ENCODE measurements at regions of chr18 and their contacts with region 1.

Region 1: GRCh38 chr18:41096504-41096903 is 858.5 kb upstream of the PIK3C3 start:
- DNase-seq: peak; percentile 60
- H3K4me3 Mint-ChIP-seq: no peak overlapping the region
- H3K27ac Mint-ChIP-seq: no peak overlapping the region
- H3K4me1 Mint-ChIP-seq: peaks cover 14% of the 10 kb centered on the region
- H3K27me3 Mint-ChIP-seq: no peaks in the 10 kb centered on the region
- CTCF ChIP-seq: peak; percentile 60

Region 2: DNA sequence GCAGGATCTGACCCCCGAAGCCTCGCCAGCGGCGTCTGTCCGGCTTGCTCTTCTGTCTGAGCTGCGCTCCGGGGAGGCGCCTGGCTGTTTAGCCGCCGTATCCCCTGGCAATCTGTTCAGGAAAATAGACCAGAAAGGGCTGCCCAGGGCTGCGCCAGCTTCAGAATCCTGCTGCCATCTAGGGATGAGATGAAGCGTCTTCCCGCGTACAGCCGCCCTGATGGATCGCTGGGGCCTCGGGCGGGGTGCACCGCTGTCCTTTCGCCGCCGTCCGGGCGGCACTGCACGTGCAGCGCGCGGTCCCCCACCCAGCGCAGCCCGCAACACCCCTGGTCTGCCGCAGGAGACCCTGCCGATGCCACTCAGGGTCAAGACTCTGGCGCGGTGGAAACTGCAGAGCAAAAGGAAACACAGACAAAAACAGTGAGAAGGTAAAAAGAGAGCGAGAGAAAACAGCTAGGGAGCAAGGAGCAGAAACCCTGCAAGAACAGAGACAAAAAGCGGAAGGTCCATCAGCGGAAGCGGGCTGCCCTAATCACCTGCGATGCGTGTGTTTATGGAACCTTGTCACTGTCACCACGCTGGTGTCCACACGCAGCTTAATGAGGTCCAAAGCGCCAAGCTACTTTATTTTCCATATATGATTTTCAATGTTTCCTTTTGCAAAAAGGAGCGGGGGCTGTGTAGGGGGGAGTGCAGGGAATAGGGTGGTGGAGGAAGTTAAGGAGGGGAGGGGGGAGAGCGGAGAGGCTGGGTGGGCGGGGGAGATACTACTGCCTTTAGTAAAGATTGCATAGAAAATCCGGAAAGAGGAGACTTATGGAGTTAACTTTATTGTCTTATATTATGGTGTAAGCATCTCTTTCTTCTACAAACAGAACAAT is 1254.8 kb before region 1 on chr18:
- CTCF ChIA-PET with region 1: no interaction called
- POLR2A ChIA-PET with region 1: no interaction called
- intact Hi-C with region 1: loop called (anchors 5 kb)
- DNase-seq: peak; percentile 67
- H3K4me3 Mint-ChIP-seq: peak overlapping the region; percentile 83
- H3K27ac Mint-ChIP-seq: no peak overlapping the region
- H3K4me1 Mint-ChIP-seq: peaks cover 4% of the 10 kb centered on the region
- H3K27me3 Mint-ChIP-seq: no peaks in the 10 kb centered on the region
- CTCF ChIP-seq: peak; percentile 38

Region 3: GRCh38 chr18:40292985-40293710 is 803.4 kb before region 1 on chr18:
- CTCF ChIA-PET with region 1: no interaction called
- POLR2A ChIA-PET with region 1: no interaction called
- intact Hi-C with region 1: loop called (anchors 10 kb)
- DNase-seq: peak; percentile 27
- H3K4me3 Mint-ChIP-seq: no peak overlapping the region
- H3K27ac Mint-ChIP-seq: no peak overlapping the region
- H3K4me1 Mint-ChIP-seq: peaks cover 4% of the 10 kb centered on the region
- H3K27me3 Mint-ChIP-seq: no peaks in the 10 kb centered on the region
- CTCF ChIP-seq: peak; percentile 47

Region 4: GRCh38 chr18:40437517-40437916 is 659.0 kb before region 1 on chr18:
- CTCF ChIA-PET with region 1: interaction called, 4 read pairs
- POLR2A ChIA-PET with region 1: no interaction called
- intact Hi-C with region 1: loop called (anchors 5 kb)
- DNase-seq: peak; percentile 4
- H3K4me3 Mint-ChIP-seq: no peak overlapping the region
- H3K27ac Mint-ChIP-seq: no peak overlapping the region
- H3K4me1 Mint-ChIP-seq: peaks cover 5% of the 10 kb centered on the region
- H3K27me3 Mint-ChIP-seq: no peaks in the 10 kb centered on the region
- CTCF ChIP-seq: no peak

Region 5: DNA sequence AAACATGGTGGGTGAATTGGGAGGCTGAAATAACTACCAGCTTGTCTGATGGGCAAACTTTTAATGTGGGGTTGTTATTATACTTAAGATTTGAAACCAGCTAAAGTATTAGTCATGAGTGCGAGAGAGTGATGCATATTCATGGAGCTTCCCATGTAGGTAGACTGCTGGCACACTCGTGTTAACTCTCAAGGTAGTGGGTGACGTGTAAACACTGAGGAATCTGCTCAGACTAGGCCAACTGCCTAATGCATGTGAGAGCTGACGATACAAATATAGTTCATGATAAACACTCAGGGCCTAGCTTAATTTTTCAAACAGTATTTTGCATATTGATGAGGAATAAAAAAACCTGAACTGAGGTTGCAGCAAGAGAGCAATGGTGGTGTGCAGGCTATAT is 307.2 kb before region 1 on chr18:
- CTCF ChIA-PET with region 1: interaction called, 3 read pairs
- POLR2A ChIA-PET with region 1: no interaction called
- intact Hi-C with region 1: loop called (anchors 10 kb)
- DNase-seq: no peak
- H3K4me3 Mint-ChIP-seq: no peak overlapping the region
- H3K27ac Mint-ChIP-seq: no peak overlapping the region
- H3K4me1 Mint-ChIP-seq: no peaks in the 10 kb centered on the region
- H3K27me3 Mint-ChIP-seq: no peaks in the 10 kb centered on the region
- CTCF ChIP-seq: no peak

Region 6: GRCh38 chr18:41134426-41134825 is 37.9 kb after region 1 on chr18:
- CTCF ChIA-PET with region 1: no interaction called
- POLR2A ChIA-PET with region 1: no interaction called
- intact Hi-C with region 1: no loop called
- DNase-seq: no peak
- H3K4me3 Mint-ChIP-seq: no peak overlapping the region
- H3K27ac Mint-ChIP-seq: no peak overlapping the region
- H3K4me1 Mint-ChIP-seq: no peaks in the 10 kb centered on the region
- H3K27me3 Mint-ChIP-seq: no peaks in the 10 kb centered on the region
- CTCF ChIP-seq: no peak

Region 7: DNA sequence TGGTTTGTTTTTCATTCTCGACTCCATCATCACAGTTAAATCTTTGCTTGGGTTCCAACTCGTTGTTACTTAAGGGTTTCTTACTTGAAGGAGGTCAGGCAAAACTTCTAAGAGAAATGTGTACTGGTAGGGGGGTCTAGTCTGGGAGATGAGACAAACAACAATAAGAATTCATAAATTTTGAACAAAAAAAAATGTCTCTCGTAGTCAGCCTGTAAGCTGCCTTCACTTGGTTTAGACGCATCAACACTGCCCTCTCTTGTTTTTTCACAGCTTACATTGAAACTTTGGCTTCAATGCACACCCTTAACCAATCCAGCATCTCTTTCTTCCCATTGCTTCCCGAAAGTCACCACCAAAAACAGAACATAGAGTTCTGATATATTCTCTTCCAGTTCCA is 282.1 kb after region 1 on chr18:
- CTCF ChIA-PET with region 1: interaction called, 3 read pairs
- POLR2A ChIA-PET with region 1: no interaction called
- intact Hi-C with region 1: loop called (anchors 1 kb)
- DNase-seq: peak; percentile 54
- H3K4me3 Mint-ChIP-seq: no peak overlapping the region
- H3K27ac Mint-ChIP-seq: no peak overlapping the region
- H3K4me1 Mint-ChIP-seq: no peaks in the 10 kb centered on the region
- H3K27me3 Mint-ChIP-seq: no peaks in the 10 kb centered on the region
- CTCF ChIP-seq: peak; percentile 55

Measured in MCF 10A (cell line).